ENCODE measurements at regions of chr17 and their contacts with region 1.

Region 1: DNA sequence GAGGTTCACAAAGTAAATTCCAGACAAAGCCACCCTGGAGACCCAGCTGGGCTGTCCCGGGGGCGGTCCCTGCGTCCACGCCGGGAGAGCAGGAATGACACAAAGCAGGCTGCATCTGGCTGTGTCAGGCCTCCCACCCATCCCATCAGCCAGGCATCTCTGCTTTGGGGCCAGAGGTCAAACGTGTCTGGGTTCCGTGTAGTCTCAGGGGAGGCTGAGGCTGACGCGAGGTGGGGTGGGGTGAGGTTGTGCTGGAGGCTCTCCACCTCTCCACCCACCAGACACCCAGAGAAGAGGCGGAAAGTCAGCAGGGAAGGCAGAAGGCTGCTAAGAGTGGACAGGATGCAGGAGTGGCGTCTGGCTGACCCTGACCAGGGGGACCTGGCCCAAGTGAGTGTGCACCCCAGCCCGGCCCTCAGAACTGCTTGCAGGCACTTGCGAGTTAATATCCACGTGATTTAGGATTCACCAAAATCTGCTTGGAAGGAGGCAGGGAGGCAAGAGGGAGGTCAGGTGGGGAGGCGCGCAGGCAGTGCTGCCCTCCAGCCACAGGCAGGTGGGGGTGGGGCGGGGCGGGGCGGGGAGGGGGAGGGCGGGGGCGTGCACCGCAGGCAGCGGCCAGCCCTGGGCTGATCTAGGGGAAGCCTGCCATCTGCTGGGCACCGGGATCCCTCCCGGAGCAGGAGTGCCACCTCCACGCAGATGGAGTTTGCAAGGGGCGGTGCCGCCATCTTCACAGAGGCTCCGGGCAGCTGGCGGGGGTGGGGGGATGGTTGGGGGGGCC is 44.3 kb downstream of the TBC1D16 start:
- DNase-seq: peak; percentile 94 to 96
- H3K4me3 ChIP-seq: peak overlapping the region; percentile 48
- H3K4me3 Mint-ChIP-seq: peak overlapping the region; percentile 96
- H3K27ac Mint-ChIP-seq: peak overlapping the region; percentile 100
- H3K4me1 ChIP-seq: peaks cover 62% of the 10 kb centered on the region
- H3K4me1 Mint-ChIP-seq: peaks cover 44% of the 10 kb centered on the region
- H3K27me3 ChIP-seq: no peaks in the 10 kb centered on the region
- H3K27me3 Mint-ChIP-seq: no peaks in the 10 kb centered on the region
- CTCF ChIP-seq: peak; percentile 67 to 79

Region 2: GRCh38 chr17:79796763-79797491 is 194.4 kb before region 1 on chr17 and contains the start of gene CBX8:
- CTCF ChIA-PET with region 1: interaction called, 11 read pairs
- POLR2A ChIA-PET with region 1: interaction called, 23 read pairs
- intact Hi-C with region 1: no loop called
- DNase-seq: peak; percentile 100
- H3K4me3 ChIP-seq: peak within 1 kb of the TSS; percentile 75
- H3K4me3 Mint-ChIP-seq: peak within 1 kb of the TSS; percentile 84
- H3K27ac Mint-ChIP-seq: peak within 1 kb of the TSS; percentile 85
- H3K4me1 ChIP-seq: peaks cover 28% of the 10 kb centered on the region
- H3K4me1 Mint-ChIP-seq: peaks cover 15% of the 10 kb centered on the region
- H3K27me3 ChIP-seq: no peaks in the 10 kb centered on the region
- H3K27me3 Mint-ChIP-seq: no peaks in the 10 kb centered on the region
- CTCF ChIP-seq: peak in 1 of 2 experiments; percentile 24
- total RNA-seq, gene CBX8: 34.3 and 36.6 TPM in 2 replicates

Region 3: DNA sequence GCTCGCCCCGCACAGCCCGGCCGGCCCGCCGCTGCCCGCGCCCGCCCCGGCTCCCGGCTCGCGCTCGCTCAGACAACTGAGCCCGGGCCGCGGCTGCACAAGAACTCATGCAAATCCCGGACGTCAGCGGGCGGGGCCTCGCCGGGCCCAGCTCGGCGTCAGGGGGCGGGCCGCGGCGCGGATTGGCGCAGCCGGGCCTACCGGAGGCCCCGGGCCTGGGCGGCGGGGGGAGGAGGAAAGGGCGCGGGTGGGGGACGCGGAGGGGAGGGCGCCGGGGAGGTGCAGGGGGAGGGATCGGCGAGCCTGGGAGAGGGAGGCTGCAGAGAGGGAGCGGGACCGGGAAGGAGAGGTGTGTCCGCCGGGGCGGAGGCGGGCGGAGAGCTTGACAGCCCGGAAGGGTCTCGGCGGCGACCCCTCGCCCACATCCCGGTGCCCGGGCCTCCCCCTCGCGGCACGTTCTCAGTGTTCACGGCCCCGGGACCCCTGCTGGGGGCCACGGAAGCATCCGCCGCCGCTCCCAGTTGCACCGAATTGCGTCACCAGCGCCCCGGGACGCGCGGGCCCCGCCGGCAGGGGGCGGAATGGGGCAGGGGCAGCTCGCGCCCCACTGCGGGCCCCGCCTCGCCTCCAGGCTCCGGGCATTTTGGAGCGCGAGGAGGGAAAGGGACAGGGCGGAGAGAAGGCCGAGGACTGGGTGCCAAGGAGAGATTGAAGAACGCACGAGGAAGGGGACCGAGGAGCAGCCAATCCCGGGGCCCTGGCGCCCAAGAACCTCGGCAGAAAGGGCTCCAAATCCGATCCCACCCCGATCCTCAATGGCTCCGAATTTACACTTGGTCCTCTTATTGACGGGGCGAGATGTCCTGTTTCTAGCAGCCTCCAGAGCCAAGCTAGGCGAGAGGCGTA is 151.7 kb before region 1 on chr17 and contains the start of gene CBX4:
- CTCF ChIA-PET with region 1: interaction called, 29 read pairs
- POLR2A ChIA-PET with region 1: interaction called, 170 read pairs
- intact Hi-C with region 1: loop called (anchors 1 kb)
- DNase-seq: peak; percentile 97 to 98
- H3K4me3 ChIP-seq: peak within 1 kb of the TSS; percentile 77
- H3K4me3 Mint-ChIP-seq: peak within 1 kb of the TSS; percentile 80
- H3K27ac Mint-ChIP-seq: peak within 1 kb of the TSS; percentile 91
- H3K4me1 ChIP-seq: peaks cover 51% of the 10 kb centered on the region
- H3K4me1 Mint-ChIP-seq: no peaks in the 10 kb centered on the region
- H3K27me3 ChIP-seq: no peaks in the 10 kb centered on the region
- H3K27me3 Mint-ChIP-seq: no peaks in the 10 kb centered on the region
- CTCF ChIP-seq: peak; percentile 77 to 97
- total RNA-seq, gene CBX4: 90.8 and 114 TPM in 2 replicates

Region 4: DNA sequence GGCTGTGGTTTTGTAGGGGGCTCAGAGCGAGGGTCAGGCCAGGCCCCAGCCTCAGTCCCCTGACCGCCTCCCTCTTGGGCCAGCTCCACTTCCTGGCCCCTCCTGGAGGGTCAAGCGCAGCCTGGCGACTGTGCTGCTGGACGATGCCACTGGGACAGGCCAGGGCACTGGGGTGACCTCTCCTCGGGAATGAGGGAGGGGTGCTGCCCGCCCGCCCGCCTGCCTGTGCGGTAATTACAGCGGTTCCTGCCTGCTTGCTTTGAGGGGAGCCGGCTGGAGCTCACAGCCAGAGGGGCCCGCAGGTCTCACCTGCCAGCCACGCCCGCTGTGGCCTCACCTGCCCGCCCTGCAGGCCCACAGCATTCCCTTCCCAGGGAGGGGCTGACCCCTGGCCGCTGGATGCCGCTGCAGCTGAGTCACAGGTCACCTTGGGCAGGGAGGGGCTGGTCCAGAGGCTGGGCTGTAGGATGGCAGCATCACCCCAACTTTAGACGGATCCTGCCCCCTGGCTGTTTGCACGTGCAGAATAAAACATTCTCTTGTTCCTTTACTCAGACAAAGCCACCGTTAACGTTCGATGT is 75.4 kb before region 1 on chr17:
- CTCF ChIA-PET with region 1: interaction called, 9 read pairs
- POLR2A ChIA-PET with region 1: interaction called, 26 read pairs
- intact Hi-C with region 1: loop called (anchors 1 kb)
- DNase-seq: peak; percentile 99
- H3K4me3 ChIP-seq: no peak overlapping the region
- H3K4me3 Mint-ChIP-seq: peak overlapping the region; percentile 52
- H3K27ac Mint-ChIP-seq: peak overlapping the region; percentile 98
- H3K4me1 ChIP-seq: peaks cover 61% of the 10 kb centered on the region
- H3K4me1 Mint-ChIP-seq: peaks cover 22% of the 10 kb centered on the region
- H3K27me3 ChIP-seq: no peaks in the 10 kb centered on the region
- H3K27me3 Mint-ChIP-seq: no peaks in the 10 kb centered on the region
- CTCF ChIP-seq: peak; percentile 36 to 66

Region 5: DNA sequence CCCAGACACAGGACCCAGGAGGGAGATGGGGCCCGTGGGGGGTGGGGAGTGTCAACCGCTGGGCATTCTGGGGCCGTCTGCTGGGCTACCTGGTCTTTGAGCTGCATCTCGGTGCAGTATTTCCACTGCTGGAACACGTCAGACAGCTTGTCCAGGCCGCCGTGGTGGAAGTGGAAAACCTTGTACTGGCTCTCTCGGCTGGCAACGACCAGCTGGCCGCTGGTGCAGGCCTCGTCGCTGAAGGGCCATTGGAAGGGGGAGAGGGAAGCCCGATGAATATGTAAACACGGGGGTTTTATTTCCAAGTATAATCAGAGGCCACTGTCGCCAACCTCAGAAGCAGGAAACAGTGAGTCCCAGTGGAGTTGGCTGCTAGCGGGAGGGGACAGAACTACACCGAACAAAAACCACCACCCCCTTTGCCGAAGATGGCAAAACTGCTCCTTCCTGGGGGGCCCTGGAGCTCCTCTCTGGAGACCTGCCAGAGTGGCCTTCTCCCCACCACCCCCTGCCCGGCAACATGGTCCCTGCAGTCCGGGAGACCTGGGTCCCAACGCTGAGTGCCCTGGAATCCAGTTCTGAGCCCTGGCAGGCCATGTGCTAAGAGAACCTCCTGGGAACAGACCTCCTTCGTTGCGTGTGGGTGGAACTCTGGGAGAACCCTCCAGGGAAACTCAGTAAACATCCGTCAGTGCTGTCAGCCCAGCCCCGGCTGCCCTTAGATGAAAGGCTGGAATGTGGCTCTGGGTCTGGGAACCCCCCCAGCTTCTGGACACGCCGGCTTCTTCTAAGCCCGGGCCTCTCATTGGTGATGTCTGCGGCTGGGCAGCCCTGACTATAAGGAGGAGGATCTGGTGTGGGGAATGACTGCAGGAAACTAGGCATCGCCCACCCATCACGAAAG is 39.7 kb before region 1 on chr17:
- CTCF ChIA-PET with region 1: interaction called, 4 read pairs
- POLR2A ChIA-PET with region 1: interaction called, 5 read pairs
- intact Hi-C with region 1: loop called (anchors 5 kb)
- DNase-seq: peak; percentile 85 to 91
- H3K4me3 ChIP-seq: no peak overlapping the region
- H3K4me3 Mint-ChIP-seq: peak overlapping the region; percentile 52
- H3K27ac Mint-ChIP-seq: peak overlapping the region; percentile 69
- H3K4me1 ChIP-seq: peaks cover 54% of the 10 kb centered on the region
- H3K4me1 Mint-ChIP-seq: peaks cover 23% of the 10 kb centered on the region
- H3K27me3 ChIP-seq: no peaks in the 10 kb centered on the region
- H3K27me3 Mint-ChIP-seq: no peaks in the 10 kb centered on the region
- CTCF ChIP-seq: no peak

Region 6: DNA sequence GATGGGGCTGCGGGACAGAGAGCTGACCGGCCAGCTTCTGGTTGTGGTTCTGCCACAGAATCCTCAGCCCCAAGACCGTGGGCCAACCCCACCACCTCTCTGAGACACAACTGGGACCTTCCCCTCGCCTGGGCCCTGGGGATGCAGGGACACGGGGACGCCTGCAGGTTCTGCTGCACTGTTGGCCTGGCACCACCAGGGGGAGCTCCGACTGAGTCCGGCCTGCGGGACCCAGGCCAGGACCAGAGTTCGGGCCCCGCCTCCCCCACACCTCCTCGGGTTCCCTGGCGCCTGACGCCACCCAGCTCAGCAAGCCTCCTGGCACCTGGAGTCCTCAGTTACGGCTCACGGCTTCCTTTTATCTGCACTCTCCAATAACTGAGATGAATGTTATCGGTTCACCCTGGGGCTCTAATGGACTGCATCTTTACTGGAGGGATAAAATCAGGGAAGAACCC is 17.1 kb after region 1 on chr17:
- CTCF ChIA-PET with region 1: interaction called, 13 read pairs
- POLR2A ChIA-PET with region 1: interaction called, 9 read pairs
- intact Hi-C with region 1: no loop called
- DNase-seq: peak; percentile 81 to 91
- H3K4me3 ChIP-seq: no peak overlapping the region
- H3K4me3 Mint-ChIP-seq: no peak overlapping the region
- H3K27ac Mint-ChIP-seq: no peak overlapping the region
- H3K4me1 ChIP-seq: peaks cover 10% of the 10 kb centered on the region; the same call in 1 of the 2 replicates
- H3K4me1 Mint-ChIP-seq: peaks cover 8% of the 10 kb centered on the region
- H3K27me3 ChIP-seq: no peaks in the 10 kb centered on the region
- H3K27me3 Mint-ChIP-seq: no peaks in the 10 kb centered on the region
- CTCF ChIP-seq: peak; percentile 96 to 97

Region 7: GRCh38 chr17:80035943-80036714 is 44.8 kb after region 1 on chr17 and contains the start of gene CCDC40:
- CTCF ChIA-PET with region 1: no interaction called
- POLR2A ChIA-PET with region 1: no interaction called
- intact Hi-C with region 1: no loop called
- DNase-seq: peak; percentile 84 to 91
- H3K4me3 ChIP-seq: peak within 1 kb of the TSS; percentile 63
- H3K4me3 Mint-ChIP-seq: peak within 1 kb of the TSS; percentile 88
- H3K27ac Mint-ChIP-seq: peak within 1 kb of the TSS; percentile 99
- H3K4me1 ChIP-seq: peaks cover 4% of the 10 kb centered on the region; the same call in 1 of the 2 replicates
- H3K4me1 Mint-ChIP-seq: peaks cover 9% of the 10 kb centered on the region
- H3K27me3 ChIP-seq: no peaks in the 10 kb centered on the region
- H3K27me3 Mint-ChIP-seq: no peaks in the 10 kb centered on the region
- CTCF ChIP-seq: peak in 1 of 2 experiments; percentile 14
- total RNA-seq, gene CCDC40: 3.7 and 3.9 TPM in 2 replicates

Region 8: DNA sequence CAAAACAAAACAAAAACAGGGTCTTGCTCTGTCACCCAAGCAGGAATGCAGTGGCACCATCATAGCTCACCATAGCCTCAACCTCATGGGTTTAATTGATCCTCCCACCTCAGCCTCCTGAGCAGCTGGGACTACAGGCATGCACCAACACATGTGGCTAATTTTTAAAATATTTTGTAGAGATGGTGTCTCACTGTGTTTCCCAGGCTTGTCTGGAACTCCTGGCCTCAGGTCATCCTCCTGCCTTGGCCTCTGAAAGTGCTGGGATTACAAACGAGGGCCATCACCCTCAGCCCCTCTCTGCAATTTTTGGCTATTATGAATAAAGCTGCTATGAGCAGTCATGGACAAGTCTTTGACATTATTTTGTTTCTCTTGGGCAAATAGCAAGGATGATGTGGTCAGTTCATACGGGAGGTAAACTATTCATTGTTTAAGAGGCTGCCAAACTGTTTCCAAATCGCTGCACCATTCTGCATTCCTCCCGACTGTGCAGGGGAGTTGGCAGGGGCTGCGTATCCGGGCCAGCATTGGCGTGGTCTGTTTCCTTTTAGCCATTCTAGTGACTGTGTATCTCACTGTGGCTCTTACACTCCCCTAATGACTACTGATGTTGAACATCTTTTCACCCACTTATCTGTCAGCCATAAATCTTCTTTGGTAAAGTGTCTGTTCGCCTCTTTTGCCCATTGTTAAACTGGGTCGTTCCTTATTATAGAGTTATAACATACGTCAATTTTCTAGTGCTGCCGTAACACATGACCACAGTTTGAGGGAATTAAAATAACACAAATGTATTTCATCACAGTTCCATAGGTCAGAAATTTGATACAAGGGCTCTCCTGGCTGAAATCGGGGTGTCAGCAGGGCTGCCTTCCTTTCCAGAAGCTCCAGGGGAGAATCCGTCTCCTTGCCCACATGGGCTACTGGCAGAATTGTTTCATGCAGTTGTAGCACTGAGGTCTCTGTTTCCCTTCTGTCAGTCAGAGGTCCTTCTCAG is 134.7 kb after region 1 on chr17:
- CTCF ChIA-PET with region 1: no interaction called
- POLR2A ChIA-PET with region 1: no interaction called
- intact Hi-C with region 1: no loop called
- DNase-seq: no peak
- H3K4me3 ChIP-seq: no peak overlapping the region
- H3K4me3 Mint-ChIP-seq: no peak overlapping the region
- H3K27ac Mint-ChIP-seq: no peak overlapping the region
- H3K4me1 ChIP-seq: 0 out of 2 replicates have a peak, but pooled peaks cover 4% of the 10 kb centered on the region
- H3K4me1 Mint-ChIP-seq: peaks cover 13% of the 10 kb centered on the region
- H3K27me3 ChIP-seq: no peaks in the 10 kb centered on the region
- H3K27me3 Mint-ChIP-seq: no peaks in the 10 kb centered on the region
- CTCF ChIP-seq: no peak